Left cardiac atrium (tissue), 4 donors: ENCODE measurements at regions of chr6 and their contacts with region 1.

Region 1: DNA sequence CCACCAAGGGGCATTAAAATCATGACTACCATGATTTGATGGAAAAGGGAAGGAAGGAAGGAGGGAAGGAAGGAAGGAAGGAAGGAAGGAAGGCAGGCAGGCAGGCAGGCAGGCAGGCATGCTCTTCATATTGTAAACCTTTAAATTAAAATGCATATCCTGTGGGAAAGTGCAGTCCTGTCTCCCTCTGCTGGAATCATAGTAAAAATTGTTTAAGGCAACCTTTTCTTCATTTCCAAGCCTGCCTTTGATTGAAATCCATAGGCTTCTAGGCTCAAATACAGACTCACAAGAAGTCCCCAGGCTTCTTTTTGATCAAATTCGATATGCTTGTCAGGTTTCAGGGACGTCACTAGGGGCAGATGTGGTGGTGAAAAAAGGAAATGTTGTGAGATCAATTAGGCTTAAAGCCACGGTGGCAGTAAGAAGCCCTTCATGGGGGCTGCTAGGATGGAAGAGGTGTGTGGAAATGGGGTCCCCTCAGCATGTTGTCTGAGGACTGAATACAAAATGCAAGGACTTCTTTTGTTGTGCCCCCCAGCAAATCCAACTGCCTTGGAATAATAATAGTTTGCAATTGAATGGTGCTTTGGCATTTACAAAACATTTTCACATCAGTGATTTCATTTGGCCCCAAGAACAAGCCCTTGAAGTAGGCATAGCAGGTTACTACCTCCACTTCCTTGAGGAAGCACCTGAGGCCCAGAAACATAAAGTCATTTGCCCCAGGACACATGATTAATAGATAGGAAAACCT is 25.6 kb upstream of the GABRR1 start:
- DNase-seq: no peak
- ATAC-seq: no peak

Region 2: DNA sequence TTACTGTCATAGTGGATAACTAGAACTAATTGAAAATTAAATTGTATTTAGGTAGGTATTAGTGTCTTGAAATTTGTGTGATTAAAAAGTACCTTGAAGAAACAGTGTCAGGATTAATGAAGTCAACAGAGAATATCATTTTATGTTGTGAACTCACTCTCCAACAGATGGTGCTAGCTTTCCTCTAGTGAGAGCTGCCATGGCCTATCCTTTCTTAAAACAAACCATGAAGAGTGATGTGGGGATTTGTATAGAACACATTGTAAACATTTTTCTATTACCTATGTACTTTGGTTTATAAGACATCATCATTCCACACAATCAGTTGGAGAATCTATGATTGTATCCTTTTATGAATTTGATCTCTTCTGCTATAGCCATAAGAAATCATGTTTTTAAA is 120.1 kb before region 1 on chr6:
- intact Hi-C with region 1: loop called (anchors 2 to 10 kb)
- DNase-seq: no peak
- ATAC-seq: peak; percentile 48 to 49